ENCODE measurements at regions of chr1 and their contacts with region 1.

Region 1: GRCh38 chr1:235336903-235337302 is 8.5 kb downstream of the GGPS1 start:
- DNase-seq: peak in 1 of 2 donors; percentile 18
- ATAC-seq: peak; percentile 65 to 98 (median 90)
- H3K4me3 ChIP-seq: peak overlapping the region in 1 of 10 donors; percentile 1
- H3K27ac ChIP-seq: peak overlapping the region in 4 of 10 donors; percentile 5 to 64 (median 26)
- H3K4me1 ChIP-seq: peaks cover 0 to 46% (median 30%) of the 10 kb centered on the region in 9 donors
- H3K27me3 ChIP-seq: no peaks in the 10 kb centered on the region
- CTCF ChIP-seq: no peak

Region 2: GRCh38 chr1:235404195-235404594 is 67.3 kb after region 1 on chr1:
- intact Hi-C with region 1: loop called in 2 of 10 experiments (anchors 10 kb)
- DNase-seq: no peak
- ATAC-seq: no peak
- H3K4me3 ChIP-seq: no peak overlapping the region
- H3K27ac ChIP-seq: no peak overlapping the region
- H3K4me1 ChIP-seq: peaks cover 0 to 13% (median 5%) of the 10 kb centered on the region in 9 donors
- H3K27me3 ChIP-seq: no peaks in the 10 kb centered on the region
- CTCF ChIP-seq: no peak

Measured in heart right ventricle (tissue), 16 donors.